HCT116 (cell line): ENCODE measurements at regions of chr7 and their contacts with region 1.

Region 1: GRCh38 chr7:24812310-24812945 is 55.2 kb upstream of the GSDME start:
- DNase-seq: no peak
- ATAC-seq: peak; percentile 97
- H3K4me3 ChIP-seq: no peak overlapping the region
- H3K27ac ChIP-seq: no peak overlapping the region
- H3K4me1 ChIP-seq: no peaks in the 10 kb centered on the region
- H3K27me3 ChIP-seq: no peaks in the 10 kb centered on the region
- CTCF ChIP-seq: peak; percentile 80 to 93 (median 82)
- POLR2A ChIP-seq: no peak
- RAD21 ChIP-seq: peak; percentile 78

Region 2: GRCh38 chr7:24349339-24349738 is 463.1 kb before region 1 on chr7:
- CTCF ChIA-PET with region 1: no interaction called
- POLR2A ChIA-PET with region 1: no interaction called
- RAD21 ChIA-PET with region 1: no interaction called
- intact Hi-C with region 1: no loop called
- DNase-seq: no peak
- ATAC-seq: no peak
- H3K4me3 ChIP-seq: no peak overlapping the region
- H3K27ac ChIP-seq: no peak overlapping the region
- H3K4me1 ChIP-seq: no peaks in the 10 kb centered on the region
- H3K27me3 ChIP-seq: no peaks in the 10 kb centered on the region
- CTCF ChIP-seq: no peak
- POLR2A ChIP-seq: no peak
- RAD21 ChIP-seq: no peak

Region 3: GRCh38 chr7:24800667-24801066 is 11.8 kb before region 1 on chr7:
- CTCF ChIA-PET with region 1: interaction called, 11 read pairs
- POLR2A ChIA-PET with region 1: interaction called, 5 read pairs
- RAD21 ChIA-PET with region 1: no interaction called
- intact Hi-C with region 1: no loop called
- DNase-seq: no peak
- ATAC-seq: no peak
- H3K4me3 ChIP-seq: no peak overlapping the region
- H3K27ac ChIP-seq: no peak overlapping the region
- H3K4me1 ChIP-seq: no peaks in the 10 kb centered on the region
- H3K27me3 ChIP-seq: no peaks in the 10 kb centered on the region
- CTCF ChIP-seq: no peak
- POLR2A ChIP-seq: no peak
- RAD21 ChIP-seq: no peak

Region 4: DNA sequence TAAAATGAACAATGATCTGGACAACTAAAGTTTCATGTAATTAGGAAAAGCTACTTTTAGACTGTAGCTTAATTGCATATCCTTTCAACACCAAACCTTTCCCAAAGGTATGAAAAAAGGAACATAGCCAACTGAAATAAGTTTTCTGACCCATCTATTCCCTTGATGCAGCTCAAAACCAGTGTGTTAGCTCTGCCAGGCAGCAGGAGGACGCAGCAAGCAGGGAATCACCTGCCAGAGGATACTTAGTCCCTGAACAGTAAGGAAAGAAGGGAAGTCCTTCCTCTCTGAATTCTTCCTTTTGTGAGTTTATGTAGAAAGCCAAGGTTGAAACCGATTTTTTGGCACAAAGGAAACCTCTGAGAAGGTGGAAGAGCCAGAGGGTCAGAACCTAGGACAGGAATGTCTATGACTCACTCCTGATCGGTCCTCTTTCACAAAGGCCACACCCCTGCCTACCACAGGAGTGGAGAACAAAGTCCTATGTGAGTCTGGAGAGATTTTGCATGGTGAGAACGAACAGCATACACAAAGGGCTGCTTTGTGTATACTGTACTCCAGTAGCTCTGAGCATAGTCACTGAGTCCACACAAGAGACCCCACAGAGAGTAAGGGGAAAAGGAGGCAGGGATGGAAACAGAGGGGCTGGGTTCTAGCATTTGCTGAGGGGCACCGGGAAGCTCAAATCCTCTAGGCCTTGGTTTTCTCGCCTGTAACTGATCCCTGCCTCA is 13.7 kb after region 1 on chr7:
- CTCF ChIA-PET with region 1: interaction called, 16 read pairs
- POLR2A ChIA-PET with region 1: interaction called, 3 read pairs
- RAD21 ChIA-PET with region 1: no interaction called
- intact Hi-C with region 1: no loop called
- DNase-seq: peak; percentile 93
- ATAC-seq: peak; percentile 83
- H3K4me3 ChIP-seq: peak overlapping the region; percentile 7 to 36; a peak in 3 of 4 replicates
- H3K27ac ChIP-seq: peak overlapping the region; percentile 94
- H3K4me1 ChIP-seq: peaks cover 78 to 97% of the 10 kb centered on the region in 2 experiments
- H3K27me3 ChIP-seq: no peaks in the 10 kb centered on the region
- CTCF ChIP-seq: no peak
- POLR2A ChIP-seq: no peak
- RAD21 ChIP-seq: no peak

Region 5: DNA sequence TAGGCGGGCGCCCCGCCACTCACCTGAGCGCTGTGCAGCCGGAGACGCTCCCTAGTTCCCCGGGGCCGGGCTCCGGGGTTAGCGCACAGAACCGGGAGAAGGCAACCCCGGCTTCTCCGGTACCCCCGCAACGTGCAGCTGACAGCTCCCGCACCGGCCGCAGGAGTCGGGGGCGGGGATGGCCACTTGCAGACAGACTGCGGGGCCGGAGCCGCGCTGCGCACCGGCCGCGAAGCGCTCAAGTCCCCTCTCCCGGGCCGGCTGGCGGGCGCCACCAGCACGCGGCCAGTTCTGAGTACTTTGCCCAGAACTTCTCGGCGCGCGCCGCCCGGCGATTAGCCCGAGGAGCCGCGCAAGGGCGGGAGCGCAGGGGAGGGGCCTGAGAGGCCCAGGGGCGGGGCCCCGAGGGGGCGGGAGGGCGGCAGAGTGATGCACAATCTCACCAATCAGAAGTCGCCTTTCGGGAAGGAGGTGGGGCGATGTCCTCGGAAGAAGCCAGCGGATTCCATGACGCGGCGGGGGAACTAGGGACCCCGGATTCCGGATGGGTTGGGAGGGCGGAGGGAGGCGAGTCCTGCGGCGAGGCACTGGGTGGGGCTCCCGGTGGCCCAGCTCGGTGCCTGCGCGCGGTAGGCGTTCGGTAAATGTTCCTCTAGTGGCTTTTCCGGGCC is 167.6 kb after region 1 on chr7 and contains the start of gene OSBPL3:
- CTCF ChIA-PET with region 1: interaction called, 14 read pairs
- POLR2A ChIA-PET with region 1: no interaction called
- RAD21 ChIA-PET with region 1: no interaction called
- intact Hi-C with region 1: no loop called
- DNase-seq: peak; percentile 92
- ATAC-seq: peak; percentile 80
- H3K4me3 ChIP-seq: peak within 1 kb of the TSS; percentile 55 to 66
- H3K27ac ChIP-seq: peak within 1 kb of the TSS; percentile 89
- H3K4me1 ChIP-seq: peaks cover 14 to 51% of the 10 kb centered on the region in 2 experiments
- H3K27me3 ChIP-seq: no peaks in the 10 kb centered on the region
- CTCF ChIP-seq: no peak
- POLR2A ChIP-seq: peak; percentile 24
- RAD21 ChIP-seq: peak; percentile 35
- total RNA-seq, gene OSBPL3: 36.8 TPM

Region 6: DNA sequence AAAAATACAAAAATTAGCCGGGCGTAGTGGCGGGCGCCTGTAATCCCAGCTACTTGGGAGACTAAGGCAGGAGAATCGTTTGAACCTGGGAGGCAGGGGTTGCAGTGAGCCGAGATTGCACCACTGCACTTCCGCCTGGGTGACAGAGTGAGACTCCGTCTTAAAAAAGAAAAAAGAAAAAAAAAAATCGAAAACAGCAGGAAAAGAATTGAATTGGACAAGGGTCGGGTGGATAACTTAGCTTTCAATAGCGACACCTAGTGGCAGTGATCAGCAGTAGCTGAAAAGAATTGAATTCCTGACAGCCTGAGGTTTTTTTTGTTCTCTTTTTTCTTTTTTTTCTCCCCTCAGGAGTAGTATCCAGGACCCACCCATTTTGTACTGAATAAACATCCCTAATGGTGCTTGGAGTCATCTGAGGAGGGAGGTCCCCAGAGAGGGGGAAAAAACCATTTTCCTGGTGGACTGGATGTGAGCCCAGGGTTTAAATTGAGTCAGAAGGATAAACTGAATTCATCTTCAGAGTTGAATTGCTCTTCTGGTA is 257.5 kb after region 1 on chr7:
- CTCF ChIA-PET with region 1: interaction called, 29 read pairs
- POLR2A ChIA-PET with region 1: no interaction called
- RAD21 ChIA-PET with region 1: no interaction called
- intact Hi-C with region 1: loop called (anchors 1 kb)
- DNase-seq: peak; percentile 72
- ATAC-seq: peak; percentile 77
- H3K4me3 ChIP-seq: peak overlapping the region in 1 of 2 experiments; percentile 15; a peak in 1 of 4 replicates
- H3K27ac ChIP-seq: no peak overlapping the region
- H3K4me1 ChIP-seq: peaks cover 0 to 23% of the 10 kb centered on the region in 2 experiments; a peak in 2 of 4 replicates
- H3K27me3 ChIP-seq: no peaks in the 10 kb centered on the region
- CTCF ChIP-seq: peak; percentile 73 to 86 (median 80)
- POLR2A ChIP-seq: no peak
- RAD21 ChIP-seq: peak; percentile 89

Region 7: GRCh38 chr7:25093268-25093826 is 280.9 kb after region 1 on chr7:
- CTCF ChIA-PET with region 1: interaction called, 85 read pairs
- POLR2A ChIA-PET with region 1: interaction called, 11 read pairs
- RAD21 ChIA-PET with region 1: interaction called, 4 read pairs
- intact Hi-C with region 1: loop called (anchors 1 kb)
- DNase-seq: peak; percentile 70
- ATAC-seq: peak; percentile 88
- H3K4me3 ChIP-seq: no peak overlapping the region
- H3K27ac ChIP-seq: no peak overlapping the region
- H3K4me1 ChIP-seq: peaks cover 2 to 30% of the 10 kb centered on the region in 2 experiments; a peak in 3 of 4 replicates
- H3K27me3 ChIP-seq: no peaks in the 10 kb centered on the region
- CTCF ChIP-seq: peak; percentile 84 to 92 (median 91)
- POLR2A ChIP-seq: no peak
- RAD21 ChIP-seq: peak; percentile 84

Region 8: GRCh38 chr7:25098096-25099046 is 285.9 kb after region 1 on chr7:
- CTCF ChIA-PET with region 1: interaction called, 85 read pairs
- POLR2A ChIA-PET with region 1: interaction called, 11 read pairs
- RAD21 ChIA-PET with region 1: interaction called in 1 of 2 experiments, 4 read pairs
- intact Hi-C with region 1: loop called (anchors 1 kb)
- DNase-seq: peak; percentile 70
- ATAC-seq: peak; percentile 80
- H3K4me3 ChIP-seq: no peak overlapping the region
- H3K27ac ChIP-seq: no peak overlapping the region
- H3K4me1 ChIP-seq: peaks cover 2 to 25% of the 10 kb centered on the region in 2 experiments; a peak in 3 of 4 replicates
- H3K27me3 ChIP-seq: no peaks in the 10 kb centered on the region
- CTCF ChIP-seq: peak; percentile 81 to 98 (median 87)
- POLR2A ChIP-seq: no peak
- RAD21 ChIP-seq: peak; percentile 93

Region 9: DNA sequence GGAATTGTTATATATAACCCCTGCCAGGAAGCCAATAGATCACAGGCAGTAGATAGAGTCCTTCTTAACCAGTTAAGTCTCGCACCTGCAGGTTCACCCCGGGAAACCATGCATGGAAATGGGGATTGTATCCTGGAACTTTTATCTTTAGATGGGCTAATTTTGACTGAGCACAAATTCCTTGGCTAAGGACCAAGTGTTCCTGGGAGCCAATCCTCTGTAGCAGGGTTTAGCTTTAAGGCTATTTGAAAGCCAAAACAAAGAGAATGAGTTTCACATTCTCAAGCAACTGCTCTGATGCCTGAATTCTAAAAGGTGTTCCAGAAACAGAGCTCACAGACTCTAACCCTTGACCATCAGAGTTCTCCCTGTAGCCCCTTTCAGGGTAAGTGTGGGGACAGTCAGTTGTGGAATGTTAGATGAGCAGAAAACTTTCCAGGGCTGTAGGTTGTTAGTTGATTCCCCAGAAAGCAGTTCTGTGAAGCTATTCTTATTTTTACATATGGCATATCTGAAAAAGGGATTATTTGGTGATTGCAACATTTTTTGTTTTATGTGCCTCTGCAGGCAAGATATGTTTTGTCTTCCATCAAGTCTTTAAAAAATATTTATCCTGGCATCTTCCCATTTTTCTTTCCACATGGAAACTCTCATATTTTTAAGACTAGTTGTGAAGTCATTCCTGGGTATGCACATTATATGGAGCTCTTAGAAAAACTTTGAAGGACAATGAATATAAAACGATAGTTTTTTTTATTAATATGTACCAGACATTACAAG is 432.0 kb after region 1 on chr7:
- CTCF ChIA-PET with region 1: no interaction called
- POLR2A ChIA-PET with region 1: no interaction called
- RAD21 ChIA-PET with region 1: no interaction called
- intact Hi-C with region 1: no loop called
- DNase-seq: no peak
- ATAC-seq: no peak
- H3K4me3 ChIP-seq: no peak overlapping the region
- H3K27ac ChIP-seq: no peak overlapping the region
- H3K4me1 ChIP-seq: no peaks in the 10 kb centered on the region
- H3K27me3 ChIP-seq: peaks cover 50% of the 10 kb centered on the region
- CTCF ChIP-seq: no peak
- POLR2A ChIP-seq: no peak
- RAD21 ChIP-seq: no peak